ENCODE measurements at regions of chr5 and their contacts with region 1.

Region 1: DNA sequence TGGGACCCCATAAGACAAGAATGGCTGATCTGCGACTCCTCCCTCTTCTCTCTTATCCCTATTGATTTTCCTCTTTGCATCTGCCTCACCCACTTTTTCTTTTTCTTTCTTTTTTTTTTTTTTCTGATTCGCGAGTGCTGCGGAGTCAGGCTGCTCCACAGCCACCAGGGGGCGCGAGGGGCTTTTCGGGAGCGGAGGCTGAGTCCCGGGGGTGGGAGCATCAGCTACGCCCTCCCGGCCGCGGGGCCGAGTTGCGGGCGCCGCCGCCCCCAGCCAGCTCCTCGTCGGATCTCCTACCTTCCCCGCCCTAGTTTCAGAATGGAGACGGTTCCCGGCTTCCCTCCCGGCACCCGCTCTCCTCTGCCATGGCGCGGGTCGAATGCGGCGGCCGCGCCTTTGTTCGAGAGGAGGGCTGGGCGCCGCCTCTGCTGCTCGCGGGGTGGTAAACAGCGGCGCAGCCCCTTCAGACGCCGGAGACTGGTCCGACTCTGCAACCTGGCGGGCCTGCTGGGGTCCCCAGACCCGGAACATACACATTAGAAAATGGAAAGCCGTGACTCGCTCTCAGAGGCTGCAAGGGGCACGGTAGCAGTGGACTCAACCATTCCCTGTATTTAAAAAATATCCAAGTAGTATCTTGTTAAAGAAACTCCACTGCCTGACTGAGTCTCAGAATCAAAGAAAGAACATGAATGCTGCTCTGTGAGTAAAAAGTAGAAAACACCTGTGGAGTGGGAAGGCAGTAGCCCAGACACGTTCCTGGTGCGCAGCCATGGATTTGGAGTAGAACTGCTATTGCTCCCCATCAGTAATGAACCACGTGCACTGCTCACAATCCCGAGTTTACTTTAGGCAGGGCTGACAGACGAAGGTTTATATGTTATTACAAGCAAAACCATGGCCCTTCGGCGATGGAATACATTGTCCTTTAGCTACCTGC is 55.7 kb downstream of the DPYSL3 start:
- DNase-seq: peak; percentile 92
- ATAC-seq: peak; percentile 89 to 91

Region 2: GRCh38 chr5:146203011-146203871 is 1250.9 kb before region 1 on chr5 and contains the start of gene RBM27:
- intact Hi-C with region 1: no loop called
- DNase-seq: peak; percentile 96
- ATAC-seq: peak; percentile 100
- total RNA-seq, gene RBM27: 12.5 to 13.7 TPM

Region 3: DNA sequence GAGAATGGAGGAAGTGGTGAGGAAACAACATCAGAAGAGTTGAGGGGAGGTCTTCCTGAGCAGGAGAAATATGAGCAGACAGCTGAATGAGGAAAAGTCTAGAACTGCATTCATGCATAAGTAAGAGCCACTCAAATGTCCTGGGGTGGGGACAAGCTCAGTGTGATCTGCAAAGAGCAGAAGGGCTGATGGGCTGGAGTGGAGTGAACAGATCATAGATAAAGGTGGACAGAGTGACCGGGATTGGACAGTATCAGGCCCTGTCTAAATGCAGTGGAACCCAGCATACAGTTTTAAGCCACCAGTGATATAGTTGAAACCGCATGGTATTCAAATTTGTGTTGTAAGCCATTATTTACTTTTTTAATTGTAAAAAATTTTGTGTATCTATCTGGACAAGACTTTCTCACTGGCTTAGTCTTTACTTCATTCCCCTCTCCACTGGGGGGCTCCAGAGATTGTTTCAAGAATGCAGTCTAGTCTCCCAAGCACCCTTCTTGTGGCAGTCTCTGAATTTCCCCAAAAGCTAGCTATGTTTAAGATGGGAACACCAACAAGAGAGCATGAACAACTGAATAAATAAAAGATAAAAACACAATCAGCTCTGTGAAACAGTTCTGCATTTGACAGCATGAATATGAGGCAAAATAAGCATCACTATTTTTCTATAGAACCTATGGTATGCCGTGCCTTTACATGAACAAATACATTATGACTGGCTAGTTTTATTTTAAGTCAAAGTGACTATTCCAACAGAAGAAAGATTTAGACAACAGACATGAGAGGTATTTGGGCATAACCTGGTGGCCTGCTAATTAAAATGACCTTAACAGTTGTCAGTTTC is 230.0 kb before region 1 on chr5:
- intact Hi-C with region 1: loop called (anchors 5 to 10 kb)
- DNase-seq: peak; percentile 29
- ATAC-seq: peak; percentile 78 to 81

Region 4: DNA sequence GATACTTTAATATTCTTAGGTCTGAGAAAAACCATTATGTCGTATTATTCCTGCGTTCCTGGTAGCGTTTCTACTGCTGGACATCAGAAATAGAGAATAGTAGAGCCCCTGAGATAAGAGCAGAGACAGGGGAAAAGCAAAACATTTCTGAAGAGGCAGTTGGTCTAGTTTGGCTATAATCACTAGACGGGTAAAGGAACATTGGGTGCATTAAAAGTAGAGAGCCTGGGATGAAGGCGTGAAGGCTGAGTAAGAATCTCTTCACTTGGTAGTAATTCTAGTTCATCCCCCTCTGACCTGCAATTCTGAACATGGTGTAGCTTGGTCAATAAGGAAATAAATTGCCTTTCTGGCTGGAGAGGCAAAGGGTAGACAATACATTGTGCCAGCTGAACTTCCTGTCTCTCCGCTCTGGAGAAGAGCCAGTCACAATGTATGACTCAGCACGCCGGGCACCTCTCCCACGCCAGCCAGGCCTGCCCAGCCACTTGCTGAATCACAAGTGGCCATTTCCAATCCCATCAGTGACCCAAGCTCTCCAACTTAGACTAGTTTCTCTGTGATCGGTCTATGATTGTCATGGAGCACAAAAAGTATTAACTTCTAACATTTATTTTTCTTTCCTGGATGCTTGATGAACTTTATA is 144.0 kb before region 1 on chr5:
- intact Hi-C with region 1: no loop called
- DNase-seq: peak; percentile 28
- ATAC-seq: peak; percentile 81 to 90

Region 5: GRCh38 chr5:147391781-147392180 is 62.4 kb before region 1 on chr5:
- intact Hi-C with region 1: loop called (anchors 10 kb)
- DNase-seq: peak; percentile 56
- ATAC-seq: peak; percentile 77 to 85

Region 6: GRCh38 chr5:147509710-147510651 is 55.8 kb after region 1 on chr5 and contains the start of gene DPYSL3:
- intact Hi-C with region 1: loop called in 1 of 2 experiments (anchors 5 kb)
- DNase-seq: peak; percentile 83
- ATAC-seq: peak; percentile 95 to 97
- total RNA-seq, gene DPYSL3: 42.4 to 55.7 TPM

Region 7: DNA sequence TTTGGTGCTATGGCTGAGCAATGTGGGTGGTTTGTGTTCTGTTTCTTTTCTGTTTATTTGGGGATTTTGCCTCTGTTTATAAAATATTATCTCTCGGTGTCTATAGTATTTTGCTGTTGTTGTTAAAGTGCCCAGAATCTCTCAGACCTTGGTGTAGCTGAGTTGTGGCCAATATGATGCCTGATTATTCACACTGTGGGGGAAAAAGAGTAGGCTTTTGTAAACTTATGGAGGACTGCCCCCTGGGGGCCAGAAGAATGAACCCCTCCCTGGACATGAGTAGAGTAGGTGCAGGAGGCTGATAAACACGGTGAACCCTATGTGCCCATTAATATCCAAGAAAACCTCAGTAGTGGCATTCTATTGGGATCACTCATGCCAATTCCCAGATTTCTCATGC is 104.7 kb after region 1 on chr5:
- intact Hi-C with region 1: loop called in 1 of 2 experiments (anchors 5 kb)
- DNase-seq: peak; percentile 68
- ATAC-seq: peak; percentile 75 to 91

Region 8: GRCh38 chr5:147576646-147577535 is 122.7 kb after region 1 on chr5:
- intact Hi-C with region 1: loop called (anchors 5 kb)
- DNase-seq: peak; percentile 53
- ATAC-seq: peak; percentile 53 to 79

Measured in left cardiac atrium (tissue), 4 donors.